Endothelial cell of umbilical vein (primary cell): ENCODE measurements at regions of chr10 and their contacts with region 1.

Region 1: DNA sequence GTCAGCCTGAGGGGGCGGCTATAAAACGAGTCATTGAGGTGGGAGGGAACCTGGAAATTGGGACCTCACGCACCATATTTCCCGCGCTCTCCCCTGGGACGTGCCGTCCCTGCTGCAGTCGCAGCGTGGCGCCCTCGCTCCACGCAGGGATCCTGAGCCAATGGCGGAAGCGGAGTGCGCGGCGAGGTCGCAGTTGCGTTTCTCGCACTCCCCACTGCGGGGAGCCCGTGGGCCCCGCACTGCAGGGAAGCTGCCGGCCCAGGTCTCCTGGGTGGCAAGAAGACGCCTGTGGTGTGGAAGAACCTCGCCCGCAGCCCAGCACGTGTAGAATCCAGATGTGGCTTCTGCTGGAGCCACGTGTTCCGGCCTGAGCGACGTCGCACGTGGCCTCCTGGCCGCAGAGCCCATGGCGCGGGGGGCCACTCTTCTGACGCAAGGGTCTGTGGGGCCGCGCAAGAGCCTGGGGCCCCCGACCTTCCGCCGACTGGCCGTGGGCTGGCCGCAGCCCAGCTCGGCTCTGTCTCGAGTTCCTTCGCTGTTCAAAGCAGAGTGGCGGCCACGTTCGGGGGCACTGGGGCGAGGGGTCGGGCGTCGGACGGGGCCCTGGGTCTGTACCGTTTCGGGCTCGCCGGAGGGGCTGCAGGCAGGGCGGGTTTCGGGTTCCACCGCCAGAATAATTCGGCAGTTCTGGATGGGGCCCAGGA is 26.4 kb downstream of the HIF1AN start:
- DNase-seq: peak; percentile 51
- H3K4me3 ChIP-seq: no peak overlapping the region
- H3K27ac ChIP-seq: no peak overlapping the region
- H3K4me1 ChIP-seq: peaks cover 2% of the 10 kb centered on the region
- H3K27me3 ChIP-seq: peaks cover 37 to 38% of the 10 kb centered on the region in 2 experiments
- CTCF ChIP-seq: peak; percentile 89 to 91
- POLR2A ChIP-seq: no peak

Region 2: GRCh38 chr10:100535715-100536353 is 26.3 kb before region 1 on chr10 and contains the start of gene HIF1AN:
- CTCF ChIA-PET with region 1: interaction called, 13 read pairs
- POLR2A ChIA-PET with region 1: no interaction called
- dilution Hi-C with region 1: no loop called
- intact Hi-C with region 1: no loop called
- DNase-seq: peak; percentile 93
- H3K4me3 ChIP-seq: peak within 1 kb of the TSS; percentile 37 to 65 (median 65)
- H3K27ac ChIP-seq: peak within 1 kb of the TSS; percentile 18
- H3K4me1 ChIP-seq: peaks cover 17% of the 10 kb centered on the region
- H3K27me3 ChIP-seq: no peaks in the 10 kb centered on the region
- CTCF ChIP-seq: peak; percentile 94 to 97
- POLR2A ChIP-seq: peak; percentile 88
- total RNA-seq, gene HIF1AN: 33.8 and 34.0 TPM in 2 replicates

Region 3: DNA sequence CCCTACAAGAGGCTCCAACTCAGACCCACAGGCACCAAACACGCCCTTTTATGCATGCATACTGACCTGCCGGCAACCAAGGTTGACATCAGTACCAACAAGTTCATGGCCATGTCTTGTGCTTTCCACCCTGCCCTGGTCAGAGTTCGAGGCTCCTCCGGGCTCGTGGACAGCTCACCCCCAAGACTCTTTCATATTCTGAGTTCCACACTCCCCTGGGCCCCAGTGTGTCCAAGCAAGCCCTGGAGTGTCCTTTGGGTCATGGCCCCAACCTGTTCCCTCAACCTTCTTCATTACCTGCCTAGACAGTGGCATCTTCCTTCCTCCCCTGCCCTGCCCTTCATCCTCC is 14.1 kb after region 1 on chr10:
- CTCF ChIA-PET with region 1: interaction called, 13 read pairs
- POLR2A ChIA-PET with region 1: no interaction called
- dilution Hi-C with region 1: no loop called
- intact Hi-C with region 1: no loop called
- DNase-seq: no peak
- H3K4me3 ChIP-seq: no peak overlapping the region
- H3K27ac ChIP-seq: no peak overlapping the region
- H3K4me1 ChIP-seq: no peaks in the 10 kb centered on the region
- H3K27me3 ChIP-seq: peaks cover 9 to 18% of the 10 kb centered on the region in 2 experiments
- CTCF ChIP-seq: no peak
- POLR2A ChIP-seq: no peak

Region 4: GRCh38 chr10:100728928-100729861 is 167.0 kb after region 1 on chr10:
- CTCF ChIA-PET with region 1: interaction called, 6 read pairs
- POLR2A ChIA-PET with region 1: no interaction called
- dilution Hi-C with region 1: no loop called
- intact Hi-C with region 1: loop called (anchors 5 kb)
- DNase-seq: no peak
- H3K4me3 ChIP-seq: no peak overlapping the region
- H3K27ac ChIP-seq: no peak overlapping the region
- H3K4me1 ChIP-seq: no peaks in the 10 kb centered on the region
- H3K27me3 ChIP-seq: peaks cover 77 to 91% of the 10 kb centered on the region in 2 experiments
- CTCF ChIP-seq: peak in 1 of 2 donors; percentile 46
- POLR2A ChIP-seq: no peak

Region 5: DNA sequence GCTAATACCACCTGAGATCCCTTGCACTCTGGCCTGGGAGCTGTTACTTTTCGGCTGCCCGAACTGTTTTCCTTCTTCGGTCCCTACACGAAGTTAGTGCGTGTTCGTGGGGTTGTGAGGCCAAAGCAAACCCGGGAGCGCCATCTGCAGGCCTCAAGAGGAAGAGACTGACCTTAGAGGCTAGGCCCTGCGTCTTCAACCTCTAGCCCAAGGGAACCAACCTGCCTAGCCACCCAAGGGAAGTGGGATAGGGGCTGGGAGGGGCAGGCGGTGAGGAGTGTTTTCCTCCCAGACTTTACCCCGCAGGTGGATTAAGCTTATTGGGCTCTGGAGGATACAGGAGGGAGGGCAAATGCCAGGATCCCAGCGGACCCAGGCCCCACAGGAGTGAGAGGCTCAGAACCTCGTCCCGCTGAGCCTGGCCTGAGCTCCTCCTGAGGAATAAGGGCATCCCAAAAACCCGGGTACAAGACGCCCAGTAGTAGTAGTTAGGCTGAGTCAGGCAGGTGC is 181.5 kb after region 1 on chr10:
- CTCF ChIA-PET with region 1: interaction called, 44 read pairs
- POLR2A ChIA-PET with region 1: no interaction called
- dilution Hi-C with region 1: no loop called
- intact Hi-C with region 1: loop called (anchors 1 kb)
- DNase-seq: peak; percentile 44
- H3K4me3 ChIP-seq: no peak overlapping the region
- H3K27ac ChIP-seq: no peak overlapping the region
- H3K4me1 ChIP-seq: no peaks in the 10 kb centered on the region
- H3K27me3 ChIP-seq: peaks cover 87 to 96% of the 10 kb centered on the region in 2 experiments
- CTCF ChIP-seq: peak; percentile 66 to 82
- POLR2A ChIP-seq: no peak

Region 6: GRCh38 chr10:100872034-100872791 is 310.1 kb after region 1 on chr10:
- CTCF ChIA-PET with region 1: interaction called, 17 read pairs
- POLR2A ChIA-PET with region 1: no interaction called
- dilution Hi-C with region 1: no loop called
- intact Hi-C with region 1: loop called (anchors 1 kb)
- DNase-seq: peak; percentile 28
- H3K4me3 ChIP-seq: no peak overlapping the region
- H3K27ac ChIP-seq: no peak overlapping the region
- H3K4me1 ChIP-seq: no peaks in the 10 kb centered on the region
- H3K27me3 ChIP-seq: peaks cover 5 to 12% of the 10 kb centered on the region in 2 experiments
- CTCF ChIP-seq: peak; percentile 66 to 70
- POLR2A ChIP-seq: no peak